CD8-positive, alpha-beta T cell (primary cell): ENCODE measurements at regions of chr1 and their contacts with region 1.

Region 1: DNA sequence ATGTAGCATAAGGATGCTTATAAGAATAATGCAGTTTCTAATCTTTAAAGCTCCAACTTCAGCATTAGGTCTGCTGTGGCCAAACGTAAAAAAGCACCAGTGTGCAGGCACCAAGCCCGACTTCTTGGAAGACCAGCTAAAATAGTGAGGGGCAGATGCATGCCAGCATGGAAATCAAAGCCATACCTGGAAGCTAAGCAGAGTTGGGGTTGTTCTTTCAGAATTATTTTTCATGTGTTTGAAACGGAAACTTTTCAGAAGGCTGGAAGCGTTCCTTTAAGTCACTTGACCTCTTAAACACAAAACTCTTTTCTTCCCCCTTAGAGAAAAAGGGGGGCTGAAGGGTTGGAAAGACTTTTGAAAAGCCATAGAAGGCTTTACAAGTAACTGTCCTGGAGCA is 329.2 kb upstream of the C1orf87 start:
- DNase-seq: no peak
- ATAC-seq: no peak
- H3K4me3 ChIP-seq: no peak overlapping the region
- H3K4me3 Mint-ChIP-seq: no peak overlapping the region
- H3K27ac ChIP-seq: no peak overlapping the region
- H3K27ac Mint-ChIP-seq: no peak overlapping the region
- H3K4me1 ChIP-seq: no peaks in the 10 kb centered on the region
- H3K4me1 Mint-ChIP-seq: no peaks in the 10 kb centered on the region
- H3K27me3 ChIP-seq: no peaks in the 10 kb centered on the region
- H3K27me3 Mint-ChIP-seq: no peaks in the 10 kb centered on the region
- CTCF ChIP-seq: no peak

Region 2: GRCh38 chr1:60345621-60346020 is 57.2 kb before region 1 on chr1:
- CTCF ChIA-PET with region 1: no interaction called
- POLR2A ChIA-PET with region 1: no interaction called
- intact Hi-C with region 1: no loop called
- DNase-seq: no peak
- ATAC-seq: no peak
- H3K4me3 ChIP-seq: no peak overlapping the region
- H3K4me3 Mint-ChIP-seq: no peak overlapping the region
- H3K27ac ChIP-seq: no peak overlapping the region
- H3K27ac Mint-ChIP-seq: no peak overlapping the region
- H3K4me1 ChIP-seq: no peaks in the 10 kb centered on the region
- H3K4me1 Mint-ChIP-seq: no peaks in the 10 kb centered on the region
- H3K27me3 ChIP-seq: no peaks in the 10 kb centered on the region
- H3K27me3 Mint-ChIP-seq: no peaks in the 10 kb centered on the region
- CTCF ChIP-seq: no peak

Region 3: GRCh38 chr1:60449876-60450275 is 47.1 kb after region 1 on chr1:
- CTCF ChIA-PET with region 1: no interaction called
- POLR2A ChIA-PET with region 1: no interaction called
- intact Hi-C with region 1: loop called in 1 of 2 experiments (anchors 5 kb)
- DNase-seq: no peak
- ATAC-seq: no peak
- H3K4me3 ChIP-seq: no peak overlapping the region
- H3K4me3 Mint-ChIP-seq: no peak overlapping the region
- H3K27ac ChIP-seq: no peak overlapping the region
- H3K27ac Mint-ChIP-seq: no peak overlapping the region
- H3K4me1 ChIP-seq: no peaks in the 10 kb centered on the region
- H3K4me1 Mint-ChIP-seq: no peaks in the 10 kb centered on the region
- H3K27me3 ChIP-seq: no peaks in the 10 kb centered on the region
- H3K27me3 Mint-ChIP-seq: no peaks in the 10 kb centered on the region
- CTCF ChIP-seq: no peak